CD4-positive, alpha-beta T cell (primary cell): ENCODE measurements at regions of chr4 and their contacts with region 1.

Region 1: GRCh38 chr4:140252742-140253555 is 99.0 kb upstream of the MAML3 start:
- DNase-seq: peak; percentile 24 to 82 (median 56)
- ATAC-seq: peak; percentile 75
- H3K4me3 ChIP-seq: peak overlapping the region; percentile 59
- H3K4me3 Mint-ChIP-seq: peak overlapping the region; percentile 87
- H3K27ac ChIP-seq: no peak overlapping the region
- H3K27ac Mint-ChIP-seq: no peak overlapping the region
- H3K4me1 ChIP-seq: peaks cover 7% of the 10 kb centered on the region
- H3K4me1 Mint-ChIP-seq: peaks cover 16% of the 10 kb centered on the region
- H3K27me3 ChIP-seq: peaks cover 8 to 9% of the 10 kb centered on the region in 2 experiments
- H3K27me3 Mint-ChIP-seq: peaks cover 13% of the 10 kb centered on the region
- CTCF ChIP-seq: peak; percentile 94

Region 2: DNA sequence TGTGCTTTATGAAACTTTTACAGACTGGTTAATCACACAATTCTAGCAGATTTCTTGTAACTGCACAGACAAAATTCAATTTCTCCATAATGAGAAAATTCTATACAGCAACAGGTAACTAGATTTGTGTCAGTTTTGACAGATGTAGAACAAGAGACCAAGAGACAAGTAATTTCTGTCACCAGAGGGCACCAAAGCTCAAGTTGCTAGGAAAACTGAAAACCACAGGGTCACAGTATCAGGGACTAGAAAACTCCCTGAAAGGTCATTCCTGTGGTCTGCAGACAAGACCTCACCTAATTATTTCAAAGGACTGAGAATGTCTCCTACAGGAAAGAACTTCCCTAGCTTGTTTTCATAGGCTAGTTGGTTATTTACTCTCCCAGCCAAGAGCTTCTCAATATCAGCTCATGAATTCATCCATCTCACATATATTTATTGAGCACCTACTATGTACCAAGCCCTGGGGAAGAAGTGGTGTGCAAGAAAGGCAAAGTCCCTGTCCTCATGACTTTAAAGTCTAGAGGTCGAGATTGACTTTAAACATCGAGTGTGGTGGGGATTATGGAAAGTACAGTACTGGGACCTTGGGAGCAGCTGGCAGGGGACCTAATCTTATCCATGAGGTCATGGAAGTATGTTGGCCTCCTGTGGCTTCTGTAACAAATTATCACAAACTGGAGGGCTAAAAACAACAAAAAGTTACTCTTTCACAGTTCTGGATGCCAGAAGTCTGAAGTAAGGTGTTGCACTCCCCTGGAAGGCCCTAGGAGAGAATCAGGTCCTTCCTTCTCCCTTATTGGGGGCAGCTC is 649.2 kb before region 1 on chr4:
- CTCF ChIA-PET with region 1: interaction called, 7 read pairs
- POLR2A ChIA-PET with region 1: interaction called, 3 read pairs
- intact Hi-C with region 1: loop called (anchors 5 kb)
- DNase-seq: peak in 7 of 14 experiments; percentile 5 to 71 (median 48)
- ATAC-seq: no peak
- H3K4me3 ChIP-seq: no peak overlapping the region
- H3K4me3 Mint-ChIP-seq: no peak overlapping the region
- H3K27ac ChIP-seq: no peak overlapping the region
- H3K27ac Mint-ChIP-seq: no peak overlapping the region
- H3K4me1 ChIP-seq: peaks cover 12% of the 10 kb centered on the region
- H3K4me1 Mint-ChIP-seq: peaks cover 15% of the 10 kb centered on the region
- H3K27me3 ChIP-seq: no peaks in the 10 kb centered on the region
- H3K27me3 Mint-ChIP-seq: peaks cover 11% of the 10 kb centered on the region
- CTCF ChIP-seq: peak; percentile 62

Region 3: DNA sequence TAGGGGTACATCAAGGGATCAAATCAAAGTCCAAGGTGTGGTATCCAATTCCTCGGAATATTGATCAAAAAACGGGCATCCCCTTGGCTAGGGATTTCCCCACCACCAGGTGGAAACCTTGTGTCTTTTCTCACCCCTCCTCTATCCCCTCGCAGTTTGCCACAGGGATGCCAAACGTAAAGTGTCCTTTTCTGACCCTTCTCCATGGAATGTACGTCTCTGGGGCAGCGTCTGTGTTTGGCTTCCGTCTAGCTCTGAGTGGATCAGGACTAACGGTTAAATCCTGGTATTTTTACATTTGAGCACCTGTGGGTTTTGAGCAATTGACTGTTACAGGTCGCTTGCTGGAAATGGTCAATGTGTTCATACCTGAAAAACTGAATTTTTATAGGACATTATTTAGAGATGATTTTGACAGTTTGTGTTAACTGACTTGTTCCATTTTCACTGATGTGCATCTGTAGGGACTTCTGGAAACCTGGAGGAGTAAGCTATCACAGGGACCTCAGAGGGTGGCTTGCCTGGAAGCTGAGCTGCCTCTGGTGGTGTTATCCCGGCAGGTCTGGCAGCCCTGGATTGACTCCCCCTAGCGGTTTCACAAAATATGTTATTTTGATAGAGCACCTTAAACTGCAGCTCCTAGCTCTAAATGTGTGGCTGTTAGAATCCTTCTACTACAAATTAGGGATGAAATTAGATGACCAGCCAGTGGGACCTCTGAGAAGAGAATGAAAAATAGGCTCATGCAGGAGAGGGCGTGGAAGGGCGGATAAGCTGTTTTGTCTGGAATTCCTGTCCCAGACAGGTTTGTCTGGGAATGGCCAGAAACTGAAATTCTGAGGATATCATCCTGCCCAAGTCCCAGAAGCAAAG is 596.1 kb before region 1 on chr4:
- CTCF ChIA-PET with region 1: interaction called, 3 read pairs
- POLR2A ChIA-PET with region 1: no interaction called
- intact Hi-C with region 1: loop called in 1 of 2 experiments (anchors 5 kb)
- DNase-seq: peak; percentile 14 to 78 (median 35)
- ATAC-seq: peak; percentile 78
- H3K4me3 ChIP-seq: no peak overlapping the region
- H3K4me3 Mint-ChIP-seq: no peak overlapping the region
- H3K27ac ChIP-seq: no peak overlapping the region
- H3K27ac Mint-ChIP-seq: no peak overlapping the region
- H3K4me1 ChIP-seq: peaks cover 20% of the 10 kb centered on the region
- H3K4me1 Mint-ChIP-seq: peaks cover 20% of the 10 kb centered on the region
- H3K27me3 ChIP-seq: peaks cover 0 to 5% of the 10 kb centered on the region in 2 experiments
- H3K27me3 Mint-ChIP-seq: peaks cover 4% of the 10 kb centered on the region
- CTCF ChIP-seq: peak; percentile 76

Region 4: DNA sequence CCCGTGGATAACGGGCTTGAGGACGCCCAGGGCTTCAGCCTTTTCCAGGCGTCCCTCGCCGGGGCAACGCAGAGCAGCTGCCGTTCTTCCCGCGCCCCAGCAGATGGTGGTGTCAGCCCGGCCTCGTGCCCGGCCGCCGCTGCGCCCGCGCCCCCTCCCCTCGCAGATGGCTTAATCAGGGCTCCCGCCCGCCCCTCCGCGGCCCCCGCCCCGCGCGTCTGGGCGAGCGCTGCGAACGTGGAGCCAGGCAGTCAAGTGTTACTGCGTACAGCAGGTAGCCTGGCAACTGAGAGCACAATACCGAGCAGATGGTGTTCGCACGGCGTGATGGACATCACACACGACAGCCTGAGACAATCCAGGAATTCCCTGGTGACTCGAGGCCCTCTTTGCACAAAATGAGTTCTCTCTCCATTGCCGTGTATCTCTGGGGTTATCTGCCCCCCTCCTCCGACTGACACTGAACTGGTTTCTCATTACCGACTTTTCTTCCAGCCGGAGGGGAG is 518.0 kb before region 1 on chr4:
- CTCF ChIA-PET with region 1: no interaction called
- POLR2A ChIA-PET with region 1: no interaction called
- intact Hi-C with region 1: loop called (anchors 2 to 5 kb)
- DNase-seq: peak; percentile 6 to 78 (median 40)
- ATAC-seq: peak; percentile 83
- H3K4me3 ChIP-seq: peak overlapping the region; percentile 44
- H3K4me3 Mint-ChIP-seq: peak overlapping the region; percentile 69
- H3K27ac ChIP-seq: no peak overlapping the region
- H3K27ac Mint-ChIP-seq: no peak overlapping the region
- H3K4me1 ChIP-seq: peaks cover 13% of the 10 kb centered on the region
- H3K4me1 Mint-ChIP-seq: peaks cover 14% of the 10 kb centered on the region
- H3K27me3 ChIP-seq: peaks cover 12 to 35% of the 10 kb centered on the region in 2 experiments
- H3K27me3 Mint-ChIP-seq: peaks cover 53% of the 10 kb centered on the region
- CTCF ChIP-seq: peak; percentile 51

Region 5: DNA sequence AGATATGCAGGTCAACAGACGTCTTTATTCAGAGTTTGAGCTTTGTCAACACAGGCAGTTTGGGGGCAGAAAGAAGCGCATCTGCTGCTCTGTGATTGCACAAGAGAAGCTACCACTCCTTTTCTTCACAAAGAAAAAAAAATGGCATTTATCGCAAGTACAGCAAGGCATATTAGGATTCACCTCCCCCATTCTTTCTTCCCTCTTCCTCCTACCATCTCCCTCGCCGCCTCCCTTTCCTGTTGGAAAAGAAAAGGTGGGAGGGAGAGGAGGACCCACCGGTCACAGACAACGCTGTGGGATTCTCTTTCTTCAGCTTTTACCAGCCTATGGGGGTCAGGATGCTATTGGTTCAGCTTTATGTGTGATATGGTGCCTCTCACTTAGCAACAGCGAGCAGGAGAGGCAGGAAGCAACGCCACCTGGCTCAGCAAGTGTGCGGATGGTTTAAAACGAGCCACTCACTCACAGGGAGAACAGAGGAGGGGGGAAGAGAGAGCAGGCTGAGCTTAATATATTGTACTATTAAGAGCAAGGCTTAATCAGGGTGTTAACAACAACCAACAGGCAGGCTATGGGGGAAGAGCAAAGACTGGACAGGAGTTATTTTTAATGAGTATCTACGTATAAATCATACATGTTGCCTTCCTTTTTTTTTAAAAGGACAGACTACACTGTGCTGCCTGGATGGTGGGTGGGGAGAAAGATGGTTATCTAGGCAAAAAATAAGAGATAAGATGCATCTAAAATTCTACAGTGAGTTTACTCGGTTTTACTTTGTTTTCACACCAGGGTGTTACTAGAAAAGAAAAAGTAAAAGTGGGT is 203.7 kb before region 1 on chr4:
- CTCF ChIA-PET with region 1: interaction called, 8 read pairs
- POLR2A ChIA-PET with region 1: no interaction called
- intact Hi-C with region 1: loop called in 1 of 2 experiments (anchors 1 kb)
- DNase-seq: peak; percentile 14 to 72 (median 44)
- ATAC-seq: peak; percentile 99
- H3K4me3 ChIP-seq: peak overlapping the region; percentile 28
- H3K4me3 Mint-ChIP-seq: peak overlapping the region; percentile 83
- H3K27ac ChIP-seq: peak overlapping the region in 1 of 2 donors; percentile 9
- H3K27ac Mint-ChIP-seq: peak overlapping the region; percentile 79
- H3K4me1 ChIP-seq: peaks cover 14% of the 10 kb centered on the region
- H3K4me1 Mint-ChIP-seq: peaks cover 48% of the 10 kb centered on the region
- H3K27me3 ChIP-seq: no peaks in the 10 kb centered on the region
- H3K27me3 Mint-ChIP-seq: no peaks in the 10 kb centered on the region
- CTCF ChIP-seq: no peak